Caco-2 (cell line): ENCODE measurements at regions of chr19 and their contacts with region 1.

Region 1: DNA sequence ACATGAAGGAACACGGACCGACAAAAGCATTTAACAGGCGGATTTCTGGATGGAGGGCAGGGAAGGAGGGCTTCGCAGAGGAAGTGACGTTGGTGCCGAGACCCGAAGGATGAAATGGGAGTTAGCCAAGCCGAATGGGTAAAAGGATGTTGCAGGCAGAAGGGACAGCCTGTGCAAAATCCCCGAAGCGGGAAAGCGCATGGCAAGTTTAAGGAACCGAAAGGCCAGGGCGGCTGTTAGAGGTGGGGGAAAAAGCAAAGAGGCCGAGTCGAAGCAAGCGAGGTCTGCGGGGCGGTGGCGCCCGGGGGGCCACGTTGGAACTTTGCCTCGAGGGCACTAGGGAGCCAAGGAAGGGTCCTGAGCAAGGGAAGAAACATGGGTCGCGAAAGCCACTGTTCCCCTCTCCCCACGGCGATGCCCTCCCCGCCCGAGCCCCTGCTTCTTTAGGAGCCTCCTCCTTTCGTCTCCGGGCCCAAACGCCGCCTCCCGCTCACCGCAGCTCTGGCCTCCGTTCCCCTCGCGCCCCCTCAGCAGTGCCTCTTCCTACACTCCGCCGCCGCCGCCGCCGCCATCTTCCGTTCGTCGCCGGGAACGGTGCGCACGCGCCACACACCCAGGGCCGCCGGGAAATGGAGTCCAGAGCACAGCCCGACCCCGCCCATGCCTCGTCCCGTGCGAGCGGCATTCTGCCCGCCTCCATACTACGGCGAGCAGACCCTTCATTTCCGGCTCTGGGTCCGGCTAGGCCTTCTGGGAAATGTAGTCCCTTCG is at the start of gene SYMPK:
- DNase-seq: peak; percentile 99
- H3K4me3 ChIP-seq: peak within 1 kb of the TSS; percentile 67
- H3K4me3 Mint-ChIP-seq: peak within 1 kb of the TSS; percentile 98
- H3K27ac Mint-ChIP-seq: peak within 1 kb of the TSS; percentile 95
- H3K4me1 ChIP-seq: no peaks in the 10 kb centered on the region
- H3K4me1 Mint-ChIP-seq: peaks cover 14% of the 10 kb centered on the region
- H3K27me3 ChIP-seq: no peaks in the 10 kb centered on the region
- H3K27me3 Mint-ChIP-seq: no peaks in the 10 kb centered on the region
- CTCF ChIP-seq: no peak
- total RNA-seq, gene SYMPK: 81.8 and 85.0 TPM in 2 replicates

Region 2: GRCh38 chr19:45753546-45753945 is 109.2 kb before region 1 on chr19:
- CTCF ChIA-PET with region 1: interaction called, 3 read pairs
- POLR2A ChIA-PET with region 1: interaction called, 10 read pairs
- intact Hi-C with region 1: no loop called
- DNase-seq: no peak
- H3K4me3 ChIP-seq: no peak overlapping the region
- H3K4me3 Mint-ChIP-seq: no peak overlapping the region
- H3K27ac Mint-ChIP-seq: no peak overlapping the region
- H3K4me1 ChIP-seq: no peaks in the 10 kb centered on the region
- H3K4me1 Mint-ChIP-seq: no peaks in the 10 kb centered on the region
- H3K27me3 ChIP-seq: no peaks in the 10 kb centered on the region
- H3K27me3 Mint-ChIP-seq: no peaks in the 10 kb centered on the region
- CTCF ChIP-seq: peak in 1 of 2 experiments; percentile 10

Region 3: DNA sequence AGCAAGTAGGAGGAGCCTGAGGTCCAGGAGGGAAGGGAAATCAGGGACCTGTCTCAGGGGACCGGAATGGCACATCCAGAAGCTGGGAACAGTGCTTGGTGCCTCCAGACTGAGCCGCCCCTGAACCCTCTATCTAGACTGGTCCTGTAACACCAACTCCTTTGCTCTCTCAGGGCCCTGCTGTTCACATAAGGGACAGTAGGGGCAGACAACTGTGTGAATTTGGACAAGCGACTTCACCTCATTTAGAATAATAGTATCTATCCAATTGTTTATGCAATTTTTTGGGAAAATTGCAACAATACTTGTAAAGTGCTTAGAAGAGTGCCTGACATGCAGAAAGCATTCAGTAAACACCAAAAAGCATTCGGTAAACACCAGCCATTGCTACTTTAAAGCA is 13.8 kb before region 1 on chr19:
- CTCF ChIA-PET with region 1: no interaction called
- POLR2A ChIA-PET with region 1: interaction called, 12 read pairs
- intact Hi-C with region 1: no loop called
- DNase-seq: peak in 1 of 2 experiments; percentile 20
- H3K4me3 ChIP-seq: no peak overlapping the region
- H3K4me3 Mint-ChIP-seq: no peak overlapping the region
- H3K27ac Mint-ChIP-seq: no peak overlapping the region
- H3K4me1 ChIP-seq: no peaks in the 10 kb centered on the region
- H3K4me1 Mint-ChIP-seq: no peaks in the 10 kb centered on the region
- H3K27me3 ChIP-seq: no peaks in the 10 kb centered on the region
- H3K27me3 Mint-ChIP-seq: no peaks in the 10 kb centered on the region
- CTCF ChIP-seq: peak; percentile 11 to 53

Region 4: DNA sequence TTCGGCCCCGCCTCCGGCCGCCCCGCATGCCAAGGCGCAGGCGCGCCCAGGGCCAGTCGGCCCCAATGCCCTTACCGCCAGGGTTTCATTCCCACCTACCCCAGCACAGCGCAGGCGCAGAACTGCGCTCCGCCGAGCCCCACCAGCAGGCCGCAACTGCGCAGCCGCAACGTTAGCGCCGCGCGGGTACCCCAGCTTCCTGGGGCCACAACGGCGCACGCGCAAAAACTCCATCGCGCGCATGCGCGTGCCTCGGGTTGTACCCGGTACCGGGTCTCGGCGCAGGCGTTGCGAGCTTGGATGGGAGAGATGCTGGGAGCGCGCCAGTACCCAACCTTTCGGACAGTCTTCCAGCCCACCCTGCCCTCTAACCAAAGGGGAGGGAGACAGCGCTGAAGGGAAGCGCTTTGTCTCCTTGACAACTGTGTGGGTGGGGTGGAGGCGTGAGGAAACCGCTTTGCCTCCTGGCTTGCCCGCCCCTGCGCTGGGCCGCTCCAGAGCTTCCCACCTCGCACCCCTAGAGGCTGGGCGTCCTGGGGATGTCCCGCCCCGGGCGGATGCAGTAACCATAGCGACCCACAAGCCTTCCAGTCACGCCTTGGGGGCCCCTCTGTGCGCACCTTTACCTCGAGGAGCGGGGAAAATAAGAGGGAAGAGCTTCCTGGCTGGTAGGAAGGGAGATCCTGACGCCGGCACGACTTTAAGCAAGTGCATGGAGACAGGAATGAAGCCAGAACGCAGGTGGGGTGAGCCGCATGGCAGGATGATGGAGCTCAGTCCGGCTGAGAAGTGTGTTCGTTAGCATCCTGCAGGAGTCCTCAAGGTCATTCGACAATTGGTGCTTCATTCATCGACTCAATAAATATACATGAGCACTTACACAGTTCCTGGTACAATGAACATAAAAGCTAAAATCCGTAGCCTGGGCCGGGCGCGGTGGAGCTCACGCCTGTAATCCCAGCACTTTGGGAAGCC is 40.2 kb after region 1 on chr19:
- CTCF ChIA-PET with region 1: interaction called, 18 read pairs
- POLR2A ChIA-PET with region 1: interaction called, 19 read pairs
- intact Hi-C with region 1: no loop called
- DNase-seq: peak; percentile 98 to 100
- H3K4me3 ChIP-seq: peak overlapping the region; percentile 92
- H3K4me3 Mint-ChIP-seq: peak overlapping the region; percentile 80
- H3K27ac Mint-ChIP-seq: peak overlapping the region; percentile 65
- H3K4me1 ChIP-seq: peaks cover 5% of the 10 kb centered on the region
- H3K4me1 Mint-ChIP-seq: no peaks in the 10 kb centered on the region
- H3K27me3 ChIP-seq: no peaks in the 10 kb centered on the region
- H3K27me3 Mint-ChIP-seq: no peaks in the 10 kb centered on the region
- CTCF ChIP-seq: no peak

Region 5: DNA sequence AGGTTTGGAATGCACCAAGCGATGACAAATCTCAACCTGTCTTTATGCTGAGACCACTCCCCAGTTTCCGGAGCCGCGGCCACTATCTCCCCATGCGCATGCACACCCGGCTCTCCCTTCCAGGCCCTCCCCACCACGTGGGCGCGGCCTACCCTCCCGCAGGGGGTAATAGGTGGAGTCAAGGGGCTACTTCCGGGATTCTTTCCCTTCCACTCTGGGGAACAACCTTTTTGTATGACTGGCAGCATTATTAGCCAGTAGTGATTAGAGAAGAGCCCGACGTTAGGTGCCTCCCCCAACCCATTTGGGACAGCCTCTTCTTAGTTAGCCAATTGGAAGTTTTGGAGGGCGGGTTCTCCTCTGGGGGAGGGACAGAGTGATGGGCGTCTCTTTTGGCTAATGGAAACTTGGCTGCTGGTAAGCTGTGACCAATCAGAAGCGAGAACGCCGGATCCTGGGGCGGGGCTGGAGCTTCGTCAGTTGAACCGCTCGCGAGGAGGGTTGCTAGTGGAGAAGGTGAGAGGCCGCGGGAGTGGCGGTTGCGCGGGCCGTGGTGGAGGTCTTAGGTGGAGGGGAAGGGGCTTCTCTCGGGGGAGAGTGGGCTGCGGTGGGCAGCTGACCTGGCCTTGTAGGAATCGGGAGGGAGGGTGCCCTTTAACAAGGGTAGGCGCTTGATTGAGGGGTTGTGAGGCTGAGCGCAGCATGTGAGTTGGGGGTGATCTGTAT is 132.4 kb after region 1 on chr19 and contains the start of gene CCDC61:
- CTCF ChIA-PET with region 1: interaction called, 3 read pairs
- POLR2A ChIA-PET with region 1: interaction called, 5 read pairs
- intact Hi-C with region 1: loop called (anchors 1 kb)
- DNase-seq: peak; percentile 98 to 99
- H3K4me3 ChIP-seq: peak within 1 kb of the TSS; percentile 49
- H3K4me3 Mint-ChIP-seq: no peak within 1 kb of the TSS
- H3K27ac Mint-ChIP-seq: no peak within 1 kb of the TSS
- H3K4me1 ChIP-seq: no peaks in the 10 kb centered on the region
- H3K4me1 Mint-ChIP-seq: peaks cover 5% of the 10 kb centered on the region
- H3K27me3 ChIP-seq: no peaks in the 10 kb centered on the region
- H3K27me3 Mint-ChIP-seq: peaks cover 4% of the 10 kb centered on the region
- CTCF ChIP-seq: no peak
- total RNA-seq, gene CCDC61: 17.1 and 21.1 TPM in 2 replicates